Panc1 (cell line): ENCODE measurements at regions of chr20 and their contacts with region 1.

Region 1: GRCh38 chr20:53939572-53940359 is 130.6 kb downstream of the BCAS1 start:
- DNase-seq: peak; percentile 96
- ATAC-seq: peak; percentile 89
- H3K4me3 ChIP-seq: peak overlapping the region; percentile 15 to 38; a peak in 3 of 4 replicates
- H3K27ac ChIP-seq: peak overlapping the region; percentile 100
- H3K4me1 ChIP-seq: peaks cover 69% of the 10 kb centered on the region
- H3K27me3 ChIP-seq: no peaks in the 10 kb centered on the region
- CTCF ChIP-seq: peak; percentile 91

Region 2: GRCh38 chr20:53578492-53579222 is 361.1 kb before region 1 on chr20:
- CTCF ChIA-PET with region 1: interaction called, 3 read pairs
- POLR2A ChIA-PET with region 1: no interaction called
- in situ Hi-C with region 1: no loop called
- intact Hi-C with region 1: loop called (anchors 5 kb)
- DNase-seq: no peak
- ATAC-seq: peak; percentile 27
- H3K4me3 ChIP-seq: peak overlapping the region; percentile 57 to 66
- H3K27ac ChIP-seq: peak overlapping the region; percentile 100
- H3K4me1 ChIP-seq: peaks cover 69% of the 10 kb centered on the region
- H3K27me3 ChIP-seq: no peaks in the 10 kb centered on the region
- CTCF ChIP-seq: peak; percentile 82

Region 3: DNA sequence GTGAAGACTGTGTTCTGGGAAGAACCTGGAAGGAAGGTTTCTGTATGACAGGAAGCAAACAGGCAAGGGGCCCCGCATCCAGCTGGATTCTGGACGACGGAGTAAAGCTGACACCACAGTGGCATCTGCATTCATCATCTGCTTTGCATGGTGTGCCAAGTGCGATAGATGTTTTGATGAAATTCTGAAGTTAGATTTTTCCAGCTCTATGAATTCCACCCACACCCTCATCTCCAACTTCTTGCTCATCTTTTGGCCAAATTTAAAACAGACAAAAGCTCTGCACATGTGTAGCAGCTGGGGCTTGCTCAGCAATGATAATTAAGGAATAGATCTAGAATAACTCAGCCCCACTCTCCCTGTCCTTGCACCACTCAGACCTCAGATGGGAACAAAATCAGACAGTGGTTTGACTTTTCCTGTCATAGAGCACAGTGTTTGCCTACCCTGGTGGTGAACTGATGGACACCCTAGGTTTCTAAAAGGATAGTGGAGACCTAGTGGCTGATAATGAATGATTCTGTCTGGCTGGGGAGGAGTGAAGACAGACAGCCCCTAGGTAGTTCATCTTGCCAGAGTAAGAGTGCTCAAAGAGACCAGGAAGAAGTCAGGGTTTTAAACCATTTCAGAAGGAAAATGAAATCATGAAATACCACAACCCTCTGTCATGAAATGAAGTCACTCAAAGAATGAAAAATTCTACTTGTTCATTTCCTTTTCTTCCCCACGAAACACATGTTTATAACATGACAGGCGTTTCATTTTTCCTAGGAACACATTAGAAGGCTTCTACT is 44.8 kb after region 1 on chr20:
- CTCF ChIA-PET with region 1: no interaction called
- POLR2A ChIA-PET with region 1: no interaction called
- in situ Hi-C with region 1: no loop called
- intact Hi-C with region 1: no loop called
- DNase-seq: no peak
- ATAC-seq: no peak
- H3K4me3 ChIP-seq: no peak overlapping the region
- H3K27ac ChIP-seq: no peak overlapping the region
- H3K4me1 ChIP-seq: no peaks in the 10 kb centered on the region
- H3K27me3 ChIP-seq: no peaks in the 10 kb centered on the region
- CTCF ChIP-seq: no peak

Region 4: DNA sequence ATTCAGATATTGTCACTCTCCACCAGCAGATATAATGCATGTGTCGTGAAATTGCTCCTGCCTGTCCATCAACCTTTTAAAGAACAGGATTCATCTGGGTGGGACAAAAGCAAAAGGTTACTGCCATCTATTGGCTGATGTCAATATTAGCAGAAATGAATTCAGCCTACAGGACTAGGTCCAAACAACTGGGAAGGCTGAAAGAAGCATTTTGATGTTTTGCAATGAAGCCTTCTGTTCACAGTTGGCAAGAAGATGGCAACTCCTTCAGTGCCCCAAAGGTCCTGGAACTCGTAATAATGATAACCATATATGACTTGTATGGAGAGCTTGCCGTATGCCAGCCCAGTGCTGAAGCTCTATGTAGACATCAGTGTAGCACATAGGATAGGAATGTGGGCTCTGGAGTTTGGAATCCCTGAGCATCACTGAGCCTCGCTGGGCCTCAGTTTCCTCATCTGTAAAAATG is 123.1 kb after region 1 on chr20:
- CTCF ChIA-PET with region 1: interaction called, 7 read pairs
- POLR2A ChIA-PET with region 1: no interaction called
- in situ Hi-C with region 1: no loop called
- intact Hi-C with region 1: loop called (anchors 2 kb)
- DNase-seq: peak; percentile 58
- ATAC-seq: peak; percentile 69
- H3K4me3 ChIP-seq: no peak overlapping the region
- H3K27ac ChIP-seq: peak overlapping the region; percentile 97
- H3K4me1 ChIP-seq: peaks cover 67% of the 10 kb centered on the region
- H3K27me3 ChIP-seq: no peaks in the 10 kb centered on the region
- CTCF ChIP-seq: peak; percentile 83

Region 5: DNA sequence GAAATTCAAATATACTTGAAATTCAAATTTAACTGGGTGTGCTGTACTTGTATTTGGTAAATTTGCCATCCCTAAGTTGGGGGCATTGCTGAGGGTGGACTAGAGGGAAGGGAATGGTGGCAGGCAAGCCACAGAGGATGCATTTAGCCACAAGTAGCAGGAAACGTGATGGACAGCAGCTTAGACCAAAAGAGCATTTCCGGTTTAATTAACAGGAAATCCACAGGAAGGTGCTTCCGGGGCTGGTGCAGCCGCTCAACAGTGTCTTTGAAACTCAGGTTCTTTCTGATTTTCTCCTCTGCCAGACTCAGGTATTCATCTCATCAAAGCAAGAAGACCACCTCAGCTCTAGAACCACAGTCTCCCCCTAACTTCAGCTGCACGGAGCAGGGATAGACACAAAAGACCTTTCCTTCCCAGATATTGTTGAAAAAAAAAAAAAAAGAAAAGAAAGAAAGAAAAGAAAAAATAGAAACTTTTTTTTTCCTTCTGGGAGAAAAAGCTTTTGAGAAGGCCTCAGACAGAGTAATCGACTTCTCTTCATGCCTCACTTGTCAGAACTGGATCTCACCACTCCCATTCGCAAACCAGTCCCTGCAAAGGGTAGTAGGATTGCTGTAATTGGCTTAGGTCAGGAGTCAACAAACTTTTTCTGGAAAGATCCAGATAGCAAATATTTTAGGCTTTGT is 138.7 kb after region 1 on chr20:
- CTCF ChIA-PET with region 1: no interaction called
- POLR2A ChIA-PET with region 1: no interaction called
- in situ Hi-C with region 1: no loop called
- intact Hi-C with region 1: no loop called
- DNase-seq: no peak
- ATAC-seq: no peak
- H3K4me3 ChIP-seq: no peak overlapping the region
- H3K27ac ChIP-seq: peak overlapping the region; percentile 55
- H3K4me1 ChIP-seq: peaks cover 9% of the 10 kb centered on the region; the same call in 1 of the 2 replicates
- H3K27me3 ChIP-seq: no peaks in the 10 kb centered on the region
- CTCF ChIP-seq: no peak

Region 6: DNA sequence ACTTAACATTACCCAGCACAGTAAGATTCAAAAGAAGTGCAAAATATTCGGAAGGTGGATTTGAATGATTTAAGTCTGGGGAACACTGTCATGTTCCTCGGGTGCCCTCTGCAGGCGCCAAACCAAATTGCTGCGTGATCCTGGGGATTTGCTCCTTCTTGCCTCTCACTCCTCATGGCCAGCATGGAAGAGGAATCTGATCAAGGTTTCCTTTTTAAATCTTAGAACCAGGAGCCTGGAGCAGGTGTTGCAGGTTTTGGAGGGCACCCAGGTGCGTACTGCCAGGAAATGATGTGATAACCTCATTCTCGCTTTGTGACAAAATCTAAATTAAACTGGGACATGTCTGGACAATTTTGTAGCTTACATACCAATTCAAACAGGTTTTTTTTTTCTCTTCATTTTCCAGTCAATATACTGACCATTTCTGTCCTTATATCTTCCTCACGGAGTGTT is 260.0 kb after region 1 on chr20:
- CTCF ChIA-PET with region 1: no interaction called
- POLR2A ChIA-PET with region 1: no interaction called
- in situ Hi-C with region 1: no loop called
- intact Hi-C with region 1: loop called (anchors 5 kb)
- DNase-seq: peak; percentile 73
- ATAC-seq: peak; percentile 72
- H3K4me3 ChIP-seq: no peak overlapping the region
- H3K27ac ChIP-seq: peak overlapping the region; percentile 39; the same call in 1 of the 2 replicates
- H3K4me1 ChIP-seq: peaks cover 8% of the 10 kb centered on the region
- H3K27me3 ChIP-seq: no peaks in the 10 kb centered on the region
- CTCF ChIP-seq: peak; percentile 96